ENCODE measurements at regions of chr2 and their contacts with region 1.

Region 1: GRCh38 chr2:108621087-108621559 is 86.9 kb downstream of the LIMS1 start:
- DNase-seq: peak; percentile 86
- H3K4me3 Mint-ChIP-seq: peak overlapping the region; percentile 84
- H3K27ac Mint-ChIP-seq: peak overlapping the region; percentile 92
- H3K4me1 Mint-ChIP-seq: peaks cover 80% of the 10 kb centered on the region
- H3K27me3 Mint-ChIP-seq: no peaks in the 10 kb centered on the region

Region 2: DNA sequence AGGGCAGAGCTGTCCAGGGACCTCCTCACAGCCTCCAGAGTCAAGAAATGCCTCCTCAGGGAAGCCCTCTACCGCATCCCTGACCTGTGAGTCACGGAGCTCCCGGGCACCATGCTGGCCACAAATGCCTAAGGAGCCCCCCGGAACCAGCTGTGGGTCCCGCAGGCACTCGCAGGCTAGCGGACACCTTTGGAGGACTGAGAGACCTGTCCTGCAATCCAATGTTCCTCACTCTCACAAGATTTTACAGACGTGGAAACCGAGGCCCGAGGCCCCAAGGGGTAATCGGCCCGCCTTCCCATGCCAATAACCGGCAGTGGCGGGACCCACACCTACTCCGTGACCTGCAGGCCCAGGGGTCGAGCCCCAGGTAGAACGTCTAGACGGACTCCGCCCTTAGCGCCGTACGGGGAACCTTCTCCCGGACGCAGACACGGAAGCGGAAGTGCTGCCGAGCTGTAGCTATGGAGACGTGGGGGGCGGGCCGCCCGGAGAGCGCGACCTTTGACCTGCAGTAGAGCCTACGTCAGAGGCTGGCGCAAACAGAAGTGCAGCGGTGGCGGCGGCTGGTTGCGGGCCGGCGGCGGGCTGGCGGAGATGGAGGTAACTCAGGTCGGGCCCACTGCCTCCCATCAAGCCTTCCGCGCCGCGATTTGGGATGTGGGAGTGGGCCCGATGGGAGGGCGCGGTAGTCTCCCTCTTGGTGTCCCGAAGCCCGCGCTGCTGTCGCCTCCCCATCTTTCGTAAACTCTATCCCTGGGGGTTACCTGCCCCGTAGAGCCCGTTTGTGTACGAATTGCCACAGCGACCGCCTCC is 172.2 kb before region 1 on chr2 and contains the start of gene GCC2:
- CTCF ChIA-PET with region 1: no interaction called
- intact Hi-C with region 1: loop called (anchors 1 kb)
- DNase-seq: peak; percentile 97
- H3K4me3 Mint-ChIP-seq: peak within 1 kb of the TSS; percentile 87
- H3K27ac Mint-ChIP-seq: peak within 1 kb of the TSS; percentile 91
- H3K4me1 Mint-ChIP-seq: peaks cover 27% of the 10 kb centered on the region
- H3K27me3 Mint-ChIP-seq: no peaks in the 10 kb centered on the region
- total RNA-seq, gene GCC2: 33.5 to 39.4 TPM

Region 3: GRCh38 chr2:108607706-108608301 is 13.3 kb before region 1 on chr2:
- CTCF ChIA-PET with region 1: interaction called, 8 read pairs
- intact Hi-C with region 1: loop called (anchors 1 kb)
- DNase-seq: peak; percentile 68
- H3K4me3 Mint-ChIP-seq: no peak overlapping the region
- H3K27ac Mint-ChIP-seq: no peak overlapping the region
- H3K4me1 Mint-ChIP-seq: peaks cover 31% of the 10 kb centered on the region
- H3K27me3 Mint-ChIP-seq: no peaks in the 10 kb centered on the region

Region 4: DNA sequence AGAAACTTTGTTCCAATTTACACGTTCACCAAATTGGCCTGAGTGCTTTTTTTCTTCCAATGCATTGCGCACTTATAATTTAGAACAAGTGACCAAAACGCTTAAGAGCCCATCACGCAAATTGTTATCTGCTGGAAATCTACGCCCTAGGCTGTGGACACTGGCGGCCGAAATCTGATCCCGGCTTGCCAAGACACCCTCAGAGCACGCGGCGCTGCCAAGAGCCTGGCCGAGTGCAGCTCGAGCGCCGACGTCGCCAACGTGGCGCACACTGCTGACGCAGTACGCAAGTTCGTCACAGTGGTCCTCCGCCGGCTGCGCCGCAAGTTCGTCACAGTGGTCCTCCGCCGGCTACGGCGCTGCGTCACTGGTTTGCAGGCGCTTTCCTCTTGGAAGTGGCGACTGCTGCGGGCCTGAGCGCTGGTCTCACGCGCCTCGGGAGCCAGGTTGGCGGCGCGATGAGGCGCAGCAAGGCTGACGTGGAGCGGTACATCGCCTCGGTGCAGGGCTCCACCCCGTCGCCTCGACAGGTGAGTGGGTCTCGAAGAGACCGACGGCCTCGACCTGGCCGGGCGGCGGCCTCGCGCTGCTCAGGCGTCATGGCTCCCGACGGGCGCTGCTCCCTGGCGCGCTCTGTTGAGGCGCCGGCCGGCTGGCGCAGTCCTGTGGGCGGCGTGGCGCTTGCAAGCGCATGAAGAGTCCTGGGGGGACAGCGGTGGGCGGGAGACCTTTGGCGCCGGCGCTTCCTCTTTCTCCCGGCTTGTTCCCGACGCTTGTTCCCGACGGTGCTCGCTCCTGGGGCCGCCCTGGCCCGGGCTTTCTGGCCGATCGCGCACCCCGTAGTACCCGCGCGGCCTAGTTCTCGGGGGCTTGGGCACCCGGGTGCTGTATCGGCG is 98.3 kb after region 1 on chr2 and contains the start of gene RANBP2:
- CTCF ChIA-PET with region 1: interaction called, 4 read pairs
- intact Hi-C with region 1: loop called (anchors 5 kb)
- DNase-seq: peak; percentile 95
- H3K4me3 Mint-ChIP-seq: peak within 1 kb of the TSS; percentile 95
- H3K27ac Mint-ChIP-seq: peak within 1 kb of the TSS; percentile 97
- H3K4me1 Mint-ChIP-seq: peaks cover 25% of the 10 kb centered on the region
- H3K27me3 Mint-ChIP-seq: no peaks in the 10 kb centered on the region
- total RNA-seq, gene RANBP2: 47.4 to 48.3 TPM

Region 5: GRCh38 chr2:109213646-109214417 is 592.7 kb after region 1 on chr2:
- CTCF ChIA-PET with region 1: no interaction called
- intact Hi-C with region 1: loop called (anchors 10 kb)
- DNase-seq: peak; percentile 78
- H3K4me3 Mint-ChIP-seq: peak overlapping the region; percentile 49
- H3K27ac Mint-ChIP-seq: peak overlapping the region; percentile 54
- H3K4me1 Mint-ChIP-seq: peaks cover 70% of the 10 kb centered on the region
- H3K27me3 Mint-ChIP-seq: peaks cover 70% of the 10 kb centered on the region

Region 6: GRCh38 chr2:109312892-109313291 is 691.8 kb after region 1 on chr2:
- CTCF ChIA-PET with region 1: no interaction called
- intact Hi-C with region 1: no loop called
- DNase-seq: no peak
- H3K4me3 Mint-ChIP-seq: no peak overlapping the region
- H3K27ac Mint-ChIP-seq: no peak overlapping the region
- H3K4me1 Mint-ChIP-seq: peaks cover 3% of the 10 kb centered on the region
- H3K27me3 Mint-ChIP-seq: no peaks in the 10 kb centered on the region